ENCODE measurements at regions of chr14 and their contacts with region 1.

Region 1: DNA sequence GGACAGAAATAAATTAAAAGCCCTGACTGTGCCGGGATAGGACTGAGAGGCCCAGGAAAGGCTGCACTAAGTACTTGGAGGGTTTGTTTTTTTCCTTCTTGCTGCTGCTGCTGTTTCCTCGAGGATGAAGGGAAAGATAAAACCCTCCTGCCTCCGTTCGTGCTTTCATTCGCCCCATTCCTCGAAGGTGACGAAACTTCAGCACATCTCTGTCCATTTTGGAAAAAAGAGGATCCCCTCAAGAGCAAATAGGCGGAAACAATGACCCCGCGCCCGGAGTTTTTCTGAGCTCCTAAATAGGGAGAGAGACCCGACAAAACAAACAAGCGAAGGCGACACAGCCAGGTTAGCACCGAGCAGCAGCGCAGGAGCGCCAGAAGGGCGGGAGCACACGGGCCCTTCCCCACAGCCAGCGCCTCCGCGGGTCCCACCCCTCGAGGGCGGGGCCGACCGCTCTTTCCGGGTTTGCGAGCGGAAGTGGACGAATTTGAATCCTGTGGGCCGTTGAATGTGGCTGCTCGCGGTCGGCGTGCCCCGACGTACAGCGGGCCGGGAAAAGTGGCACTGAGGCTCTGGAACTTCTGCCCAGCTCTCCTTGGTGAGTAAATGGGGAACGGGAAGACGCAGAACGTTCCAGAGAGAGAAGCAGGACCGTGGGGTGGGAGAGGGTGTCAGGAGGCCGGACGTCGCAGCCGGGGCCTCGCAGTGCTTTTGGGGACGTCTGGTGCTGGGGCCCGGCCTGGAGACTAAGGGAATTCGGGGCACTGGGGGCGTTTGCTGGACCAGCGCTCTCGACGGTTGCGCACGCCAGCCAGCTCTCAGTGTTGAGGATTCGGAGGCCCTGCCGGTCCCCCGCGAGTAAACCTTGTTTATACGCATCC is at the start of gene G2E3:
- DNase-seq: peak; percentile 98
- H3K4me3 Mint-ChIP-seq: peak within 1 kb of the TSS; percentile 99
- H3K27ac Mint-ChIP-seq: peak within 1 kb of the TSS; percentile 100
- H3K4me1 Mint-ChIP-seq: peaks cover 22% of the 10 kb centered on the region
- H3K27me3 Mint-ChIP-seq: peaks cover 2% of the 10 kb centered on the region
- total RNA-seq, gene G2E3: 22.4 and 23.8 TPM in 2 replicates

Region 2: GRCh38 chr14:30088620-30089019 is 470.3 kb before region 1 on chr14:
- intact Hi-C with region 1: no loop called
- DNase-seq: no peak
- H3K4me3 Mint-ChIP-seq: no peak overlapping the region
- H3K27ac Mint-ChIP-seq: no peak overlapping the region
- H3K4me1 Mint-ChIP-seq: no peaks in the 10 kb centered on the region
- H3K27me3 Mint-ChIP-seq: no peaks in the 10 kb centered on the region

Region 3: DNA sequence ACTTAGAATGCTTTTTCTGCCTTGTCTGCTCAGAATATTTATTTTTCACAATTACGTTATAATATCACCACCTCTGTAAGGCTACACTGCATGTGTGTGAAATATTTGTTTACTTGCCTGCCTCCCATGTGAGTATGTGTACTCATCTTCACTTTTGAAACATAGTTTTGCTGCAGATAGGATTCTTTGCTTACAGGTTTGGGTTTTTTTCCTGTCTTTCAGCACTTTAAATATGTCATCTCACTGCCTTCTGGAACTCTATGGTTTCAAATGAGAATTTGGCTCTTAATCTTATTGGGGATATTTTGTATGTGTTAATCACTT is 10.9 kb after region 1 on chr14:
- intact Hi-C with region 1: loop called (anchors 1 kb)
- DNase-seq: no peak
- H3K4me3 Mint-ChIP-seq: no peak overlapping the region
- H3K27ac Mint-ChIP-seq: no peak overlapping the region
- H3K4me1 Mint-ChIP-seq: peaks cover 49% of the 10 kb centered on the region
- H3K27me3 Mint-ChIP-seq: no peaks in the 10 kb centered on the region

Region 4: GRCh38 chr14:31456841-31457664 is 898.1 kb after region 1 on chr14 and contains the start of gene DTD2:
- intact Hi-C with region 1: loop called (anchors 1 kb)
- DNase-seq: peak; percentile 97
- H3K4me3 Mint-ChIP-seq: peak within 1 kb of the TSS; percentile 95
- H3K27ac Mint-ChIP-seq: peak within 1 kb of the TSS; percentile 98
- H3K4me1 Mint-ChIP-seq: peaks cover 24% of the 10 kb centered on the region
- H3K27me3 Mint-ChIP-seq: peaks cover 4% of the 10 kb centered on the region
- total RNA-seq, gene DTD2: 30.8 and 32.2 TPM in 2 replicates

Measured in activated CD4-positive, alpha-beta T cell treated with anti-CD3 and anti-CD28 coated beads, Interleukin-2, amount 10 ng/mL, durations not matched to agents 24 days and 14 days (primary cell).